ENCODE measurements at regions of chr1 and their contacts with region 1.

Region 1: DNA sequence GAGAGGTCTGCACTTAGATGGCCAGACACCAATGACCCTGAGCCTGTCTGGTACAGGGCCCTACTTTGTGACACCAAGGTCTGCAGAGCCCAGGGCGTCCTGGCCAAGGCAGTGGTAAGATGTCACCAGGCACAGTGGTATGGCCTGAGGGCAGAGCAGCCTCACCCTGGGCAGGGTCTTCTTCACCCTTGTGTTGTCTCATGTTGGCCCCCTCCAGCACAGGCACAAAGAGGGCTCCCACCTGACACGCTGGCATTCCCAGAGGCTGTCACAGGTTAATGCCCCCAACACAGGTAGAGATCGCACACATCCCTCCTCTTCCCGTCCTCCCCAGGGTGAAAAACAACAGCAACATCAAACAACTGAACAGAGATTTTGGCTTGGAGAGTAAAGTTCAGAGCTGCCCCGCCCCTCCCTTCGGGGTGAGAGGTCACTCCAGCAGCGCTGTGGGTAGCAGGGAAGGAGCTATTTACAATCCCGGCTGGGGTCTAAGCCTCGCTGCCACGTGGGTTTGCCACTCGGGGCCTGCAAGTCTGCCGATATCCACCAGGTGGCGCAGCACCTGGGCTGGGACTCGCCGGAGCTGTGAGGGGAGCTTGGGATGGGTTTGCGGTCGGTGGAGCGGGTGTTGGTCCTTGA is 12.6 kb downstream of the EFNA3 start:
- DNase-seq: peak; percentile 52 to 89 (median 79)
- ATAC-seq: peak; percentile 92
- H3K4me3 ChIP-seq: no peak overlapping the region
- H3K4me3 Mint-ChIP-seq: no peak overlapping the region
- H3K27ac ChIP-seq: no peak overlapping the region
- H3K27ac Mint-ChIP-seq: no peak overlapping the region
- H3K4me1 ChIP-seq: peaks cover 11% of the 10 kb centered on the region
- H3K4me1 Mint-ChIP-seq: peaks cover 8% of the 10 kb centered on the region
- H3K27me3 ChIP-seq: no peaks in the 10 kb centered on the region
- H3K27me3 Mint-ChIP-seq: peaks cover 3% of the 10 kb centered on the region
- CTCF ChIP-seq: peak; percentile 94

Region 2: GRCh38 chr1:155106850-155107249 is 15.7 kb after region 1 on chr1:
- CTCF ChIA-PET with region 1: interaction called, 14 read pairs
- POLR2A ChIA-PET with region 1: no interaction called
- intact Hi-C with region 1: no loop called
- DNase-seq: no peak
- ATAC-seq: no peak
- H3K4me3 ChIP-seq: no peak overlapping the region
- H3K4me3 Mint-ChIP-seq: no peak overlapping the region
- H3K27ac ChIP-seq: no peak overlapping the region
- H3K27ac Mint-ChIP-seq: no peak overlapping the region
- H3K4me1 ChIP-seq: no peaks in the 10 kb centered on the region
- H3K4me1 Mint-ChIP-seq: no peaks in the 10 kb centered on the region
- H3K27me3 ChIP-seq: no peaks in the 10 kb centered on the region
- H3K27me3 Mint-ChIP-seq: peaks cover 7% of the 10 kb centered on the region
- CTCF ChIP-seq: no peak

Region 3: DNA sequence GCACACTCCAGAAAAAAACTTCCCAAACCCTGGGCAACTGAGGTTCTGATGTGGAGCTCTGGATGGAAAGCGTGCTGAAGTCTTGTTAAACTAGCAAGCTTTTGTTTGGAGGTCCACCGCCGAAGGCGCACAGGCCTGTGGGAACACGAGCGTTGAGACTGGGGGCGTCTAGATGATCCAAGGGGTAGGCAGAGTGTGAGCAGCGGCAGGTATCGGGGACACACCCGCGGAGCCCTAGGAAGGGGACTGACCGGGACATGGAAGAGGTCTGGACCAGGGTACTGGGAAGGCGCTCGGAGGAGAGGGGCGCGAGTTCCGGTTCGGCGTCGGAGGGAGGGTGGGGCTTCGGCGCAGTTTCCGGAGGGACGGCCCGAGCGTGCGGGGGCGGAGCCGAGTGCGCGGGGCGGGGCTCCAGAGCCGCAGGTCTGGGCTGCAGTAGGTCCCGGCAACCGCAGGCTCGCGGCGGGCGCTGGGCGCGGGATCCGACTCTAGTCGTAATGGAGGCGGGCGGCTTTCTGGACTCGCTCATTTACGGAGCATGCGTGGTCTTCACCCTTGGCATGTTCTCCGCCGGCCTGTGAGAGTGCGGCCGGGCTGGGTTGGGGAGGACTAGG is 44.3 kb after region 1 on chr1 and contains the start of gene SLC50A1:
- CTCF ChIA-PET with region 1: interaction called, 24 read pairs
- POLR2A ChIA-PET with region 1: interaction called, 4 read pairs
- intact Hi-C with region 1: loop called in 1 of 2 experiments (anchors 5 kb)
- DNase-seq: peak; percentile 82 to 96 (median 92)
- ATAC-seq: peak; percentile 84
- H3K4me3 ChIP-seq: peak within 1 kb of the TSS; percentile 93 to 95
- H3K4me3 Mint-ChIP-seq: peak within 1 kb of the TSS; percentile 98
- H3K27ac ChIP-seq: peak within 1 kb of the TSS; percentile 78 to 99
- H3K27ac Mint-ChIP-seq: peak within 1 kb of the TSS; percentile 99
- H3K4me1 ChIP-seq: peaks cover 29% of the 10 kb centered on the region
- H3K4me1 Mint-ChIP-seq: peaks cover 49% of the 10 kb centered on the region
- H3K27me3 ChIP-seq: no peaks in the 10 kb centered on the region
- H3K27me3 Mint-ChIP-seq: no peaks in the 10 kb centered on the region
- CTCF ChIP-seq: no peak
- total RNA-seq, gene SLC50A1: 12.9 to 14.2 TPM

Region 4: GRCh38 chr1:155167166-155168104 is 76.2 kb after region 1 on chr1:
- CTCF ChIA-PET with region 1: interaction called, 270 read pairs
- POLR2A ChIA-PET with region 1: interaction called, 10 read pairs
- intact Hi-C with region 1: loop called (anchors 1 kb)
- DNase-seq: peak; percentile 69 to 91 (median 86)
- ATAC-seq: peak; percentile 80
- H3K4me3 ChIP-seq: peak overlapping the region in 1 of 2 experiments; percentile 28
- H3K4me3 Mint-ChIP-seq: peak overlapping the region; percentile 60
- H3K27ac ChIP-seq: no peak overlapping the region
- H3K27ac Mint-ChIP-seq: no peak overlapping the region
- H3K4me1 ChIP-seq: peaks cover 19% of the 10 kb centered on the region
- H3K4me1 Mint-ChIP-seq: peaks cover 22% of the 10 kb centered on the region
- H3K27me3 ChIP-seq: no peaks in the 10 kb centered on the region
- H3K27me3 Mint-ChIP-seq: no peaks in the 10 kb centered on the region
- CTCF ChIP-seq: peak; percentile 64

Region 5: GRCh38 chr1:155591770-155592169 is 500.6 kb after region 1 on chr1:
- CTCF ChIA-PET with region 1: no interaction called
- POLR2A ChIA-PET with region 1: no interaction called
- intact Hi-C with region 1: loop called in 1 of 2 experiments (anchors 5 kb)
- DNase-seq: peak in 5 of 9 experiments; percentile 11 to 78 (median 31)
- ATAC-seq: peak; percentile 77
- H3K4me3 ChIP-seq: no peak overlapping the region
- H3K4me3 Mint-ChIP-seq: no peak overlapping the region
- H3K27ac ChIP-seq: no peak overlapping the region
- H3K27ac Mint-ChIP-seq: no peak overlapping the region
- H3K4me1 ChIP-seq: no peaks in the 10 kb centered on the region
- H3K4me1 Mint-ChIP-seq: peaks cover 3% of the 10 kb centered on the region
- H3K27me3 ChIP-seq: no peaks in the 10 kb centered on the region
- H3K27me3 Mint-ChIP-seq: no peaks in the 10 kb centered on the region
- CTCF ChIP-seq: peak; percentile 64